Activated CD8-positive, alpha-beta T cell treated with anti-CD3 and anti-CD28 coated beads, Interleukin-2, amount 10 ng/mL, durations not matched to agents 7 days and 5 days (primary cell): ENCODE measurements at regions of chr4 and their contacts with region 1.

Region 1: GRCh38 chr4:108030332-108030731 is 40.6 kb downstream of the HADH start:
- DNase-seq: peak; percentile 85
- ATAC-seq: peak; percentile 87
- H3K4me3 Mint-ChIP-seq: peak overlapping the region; percentile 48
- H3K27ac Mint-ChIP-seq: peak overlapping the region; percentile 79
- H3K4me1 Mint-ChIP-seq: peaks cover 70% of the 10 kb centered on the region
- H3K27me3 Mint-ChIP-seq: no peaks in the 10 kb centered on the region

Region 2: DNA sequence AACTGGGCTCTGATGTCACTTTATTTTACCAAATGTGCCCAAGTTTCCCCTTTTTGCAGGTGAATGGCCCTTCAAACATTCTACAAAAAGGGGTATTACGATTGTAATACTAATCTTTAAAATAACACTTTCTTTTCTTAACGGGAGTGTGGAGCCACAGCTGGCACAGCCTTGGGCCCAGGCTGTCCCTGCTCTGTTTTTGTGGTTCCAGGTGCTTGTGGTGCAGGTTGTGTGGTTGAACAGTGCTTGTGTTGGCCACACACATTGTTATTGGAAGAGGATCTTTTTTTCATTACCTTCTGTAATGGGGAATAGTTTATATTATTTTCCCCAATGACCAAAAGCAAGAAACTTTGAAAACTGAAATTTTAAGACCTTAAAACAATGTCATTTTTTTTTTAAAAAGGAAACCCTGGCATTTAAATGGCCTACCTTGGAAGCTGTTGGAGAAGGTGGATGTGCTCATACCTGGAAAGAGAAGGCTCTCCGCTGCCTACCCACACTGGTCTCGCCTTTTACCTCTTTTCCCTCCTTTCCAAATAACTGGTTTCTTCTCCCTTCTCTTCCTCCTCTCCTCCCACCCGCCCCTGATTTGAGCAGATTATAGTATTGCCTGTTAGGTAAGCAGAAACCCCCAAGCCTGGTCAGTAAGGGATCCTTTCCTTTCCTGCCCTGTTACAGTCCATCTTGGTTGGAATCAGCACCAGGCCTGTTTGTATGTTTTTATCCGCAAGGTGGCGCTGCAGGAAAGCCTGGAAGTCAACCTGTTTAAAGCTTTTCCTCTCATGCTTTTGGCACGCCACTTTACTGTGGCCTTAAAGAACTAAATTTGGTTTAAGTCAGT is 12.1 kb before region 1 on chr4:
- CTCF ChIA-PET with region 1: interaction called, 72 read pairs
- POLR2A ChIA-PET with region 1: interaction called, 3 read pairs
- DNase-seq: peak; percentile 90
- ATAC-seq: peak; percentile 68
- H3K4me3 Mint-ChIP-seq: no peak overlapping the region
- H3K27ac Mint-ChIP-seq: peak overlapping the region; percentile 58
- H3K4me1 Mint-ChIP-seq: peaks cover 33% of the 10 kb centered on the region
- H3K27me3 Mint-ChIP-seq: no peaks in the 10 kb centered on the region

Region 3: DNA sequence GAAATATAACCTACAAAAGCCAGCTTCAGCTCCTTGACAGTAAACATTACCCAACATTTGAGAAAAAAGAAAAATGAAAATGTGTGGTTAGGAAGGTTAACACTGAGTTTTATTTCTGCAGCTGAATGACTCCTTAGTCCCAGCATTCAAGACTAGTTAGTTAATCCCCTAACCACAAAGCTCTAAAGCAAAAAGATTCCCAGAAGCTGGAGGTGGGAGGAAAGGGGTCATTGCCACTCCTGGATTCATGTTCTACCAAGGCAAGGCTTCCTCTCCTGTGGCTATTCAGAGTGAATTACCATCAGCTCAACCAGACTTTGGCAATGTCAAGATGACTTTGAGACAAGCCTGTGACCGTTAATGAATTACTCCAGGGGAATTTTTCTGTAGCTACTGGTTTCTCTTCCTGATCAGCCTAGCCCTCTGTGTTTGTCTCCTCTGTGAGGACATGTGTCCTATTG is 22.9 kb after region 1 on chr4:
- CTCF ChIA-PET with region 1: interaction called, 43 read pairs
- POLR2A ChIA-PET with region 1: interaction called, 3 read pairs
- DNase-seq: no peak
- ATAC-seq: no peak
- H3K4me3 Mint-ChIP-seq: no peak overlapping the region
- H3K27ac Mint-ChIP-seq: peak overlapping the region; percentile 76
- H3K4me1 Mint-ChIP-seq: peaks cover 79% of the 10 kb centered on the region
- H3K27me3 Mint-ChIP-seq: no peaks in the 10 kb centered on the region

Region 4: GRCh38 chr4:108080747-108081146 is 50.4 kb after region 1 on chr4:
- CTCF ChIA-PET with region 1: interaction called, 19 read pairs
- POLR2A ChIA-PET with region 1: interaction called, 3 read pairs
- DNase-seq: peak; percentile 62
- ATAC-seq: peak; percentile 82
- H3K4me3 Mint-ChIP-seq: peak overlapping the region; percentile 67
- H3K27ac Mint-ChIP-seq: peak overlapping the region; percentile 91
- H3K4me1 Mint-ChIP-seq: peaks cover 62% of the 10 kb centered on the region
- H3K27me3 Mint-ChIP-seq: no peaks in the 10 kb centered on the region

Region 5: GRCh38 chr4:108118490-108118889 is 88.2 kb after region 1 on chr4:
- CTCF ChIA-PET with region 1: interaction called, 23 read pairs
- POLR2A ChIA-PET with region 1: no interaction called
- DNase-seq: no peak
- ATAC-seq: peak; percentile 34
- H3K4me3 Mint-ChIP-seq: peak overlapping the region; percentile 61
- H3K27ac Mint-ChIP-seq: peak overlapping the region; percentile 84
- H3K4me1 Mint-ChIP-seq: peaks cover 86% of the 10 kb centered on the region
- H3K27me3 Mint-ChIP-seq: no peaks in the 10 kb centered on the region

Region 6: DNA sequence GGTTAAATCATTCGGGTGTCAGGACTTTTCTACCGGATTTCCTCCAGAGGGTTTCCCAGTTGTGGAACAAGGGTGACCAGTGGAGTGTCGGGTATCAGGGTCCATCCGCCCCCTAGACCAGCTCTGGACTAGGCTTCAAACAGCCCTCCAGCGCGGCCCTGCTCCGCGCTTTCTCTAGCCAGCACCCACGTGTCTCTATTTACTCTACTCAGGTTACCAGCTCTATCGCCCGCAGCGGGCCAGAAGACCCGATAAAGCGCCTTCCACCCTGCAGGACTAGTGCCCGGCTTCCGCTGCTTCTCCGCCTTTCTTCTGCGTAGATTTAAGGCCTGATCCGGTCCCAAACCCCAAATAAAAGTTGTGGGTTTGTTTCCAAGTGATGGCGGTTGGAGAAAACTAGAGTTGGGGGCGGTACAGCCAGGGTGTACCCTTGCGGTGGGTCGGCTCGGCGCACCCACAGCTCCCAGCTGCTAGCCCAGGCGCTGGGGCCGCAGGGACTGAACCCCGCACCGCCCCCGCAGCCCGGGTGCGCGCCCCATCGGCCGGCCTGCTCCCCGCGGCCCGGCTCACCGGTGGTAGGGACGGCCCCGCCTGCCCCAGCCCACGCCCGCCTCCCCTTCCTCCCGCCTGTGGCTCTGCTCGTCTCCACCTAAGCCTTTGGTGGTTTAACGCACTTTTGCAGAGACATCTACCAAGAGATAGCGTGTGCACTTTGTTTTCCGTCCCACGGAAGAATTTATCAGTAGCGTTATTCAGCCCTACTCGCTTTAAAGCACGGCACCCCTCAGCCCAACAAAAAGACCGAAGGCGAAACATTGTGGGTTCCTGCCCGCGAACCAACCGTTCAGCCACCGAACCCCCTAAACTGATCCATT is 136.3 kb after region 1 on chr4:
- CTCF ChIA-PET with region 1: interaction called, 11 read pairs
- POLR2A ChIA-PET with region 1: interaction called, 5 read pairs
- DNase-seq: peak; percentile 81
- ATAC-seq: peak; percentile 45
- H3K4me3 Mint-ChIP-seq: peak overlapping the region; percentile 99
- H3K27ac Mint-ChIP-seq: peak overlapping the region; percentile 96
- H3K4me1 Mint-ChIP-seq: peaks cover 35% of the 10 kb centered on the region
- H3K27me3 Mint-ChIP-seq: peaks cover 21% of the 10 kb centered on the region

Region 7: GRCh38 chr4:108581083-108581482 is 550.8 kb after region 1 on chr4:
- CTCF ChIA-PET with region 1: interaction called, 13 read pairs
- POLR2A ChIA-PET with region 1: no interaction called
- DNase-seq: no peak
- ATAC-seq: no peak
- H3K4me3 Mint-ChIP-seq: no peak overlapping the region
- H3K27ac Mint-ChIP-seq: no peak overlapping the region
- H3K4me1 Mint-ChIP-seq: peaks cover 6% of the 10 kb centered on the region
- H3K27me3 Mint-ChIP-seq: no peaks in the 10 kb centered on the region